ENCODE measurements at regions of chr18 and their contacts with region 1.

Region 1: DNA sequence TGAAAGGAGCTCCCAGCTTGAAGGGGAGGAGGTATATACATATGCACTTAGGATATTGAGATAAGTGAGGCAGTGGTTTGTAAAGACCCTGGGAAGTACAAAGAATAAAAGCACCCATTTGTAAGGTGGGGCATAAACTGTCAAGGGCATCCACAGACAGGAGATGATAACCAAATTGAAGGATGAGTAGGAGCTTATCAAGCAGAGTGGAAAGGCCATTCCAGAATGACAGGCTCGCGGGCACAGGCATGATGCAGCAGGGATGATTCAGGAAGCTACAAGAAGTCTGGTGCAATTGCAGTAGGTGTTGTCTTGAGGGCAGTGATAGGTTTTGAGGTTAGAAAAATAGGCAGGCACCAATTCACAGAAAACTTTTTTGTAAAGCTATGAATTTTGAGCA is 504.8 kb downstream of the PIK3C3 start:
- DNase-seq: no peak
- ATAC-seq: no peak

Region 2: DNA sequence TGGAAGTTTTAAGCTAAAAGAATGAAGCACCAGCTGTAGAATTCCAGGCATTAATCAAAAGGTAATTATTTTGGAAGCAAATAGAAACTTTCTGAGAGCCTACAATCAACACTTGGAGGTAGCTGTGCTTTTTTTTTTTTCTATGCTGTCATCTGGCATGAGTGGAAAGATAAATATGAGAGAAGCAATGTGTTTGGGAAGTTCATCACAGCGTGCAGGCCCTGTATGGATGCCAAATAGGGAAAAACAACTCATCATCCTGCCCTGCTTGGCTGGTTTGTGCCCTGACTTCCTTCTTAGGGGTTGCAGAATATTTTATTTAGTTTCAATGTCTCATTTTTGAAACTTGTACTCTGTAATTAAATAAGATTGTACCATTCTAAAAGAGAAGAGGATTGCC is 67.5 kb before region 1 on chr18:
- intact Hi-C with region 1: loop called (anchors 10 kb)
- DNase-seq: no peak
- ATAC-seq: no peak

Region 3: GRCh38 chr18:42414746-42415454 is 45.0 kb before region 1 on chr18:
- intact Hi-C with region 1: no loop called
- DNase-seq: no peak
- ATAC-seq: peak; percentile 82

Measured in Right ventricle myocardium inferior (tissue), 1 donor.